ENCODE measurements at regions of chr6 and their contacts with region 1.

Region 1: GRCh38 chr6:136792410-136793262 is at the start of gene MAP3K5:
- DNase-seq: peak; percentile 80 to 95 (median 83)
- ATAC-seq: peak; percentile 90
- H3K4me3 ChIP-seq: peak within 1 kb of the TSS; percentile 63
- H3K27ac ChIP-seq: peak within 1 kb of the TSS; percentile 86
- H3K4me1 ChIP-seq: peaks cover 11 to 21% of the 10 kb centered on the region in 2 experiments; a peak in 4 of 5 replicates
- H3K27me3 ChIP-seq: no peaks in the 10 kb centered on the region
- CTCF ChIP-seq: peak; percentile 85 to 97 (median 90)
- EP300 ChIP-seq: peak; percentile 15; the same call in 1 of the 2 replicates
- POLR2A ChIP-seq: peak; percentile 86
- RAD21 ChIP-seq: peak; percentile 94 to 96
- polyA plus RNA-seq, gene MAP3K5: 2.2 to 3.3 TPM

Region 2: DNA sequence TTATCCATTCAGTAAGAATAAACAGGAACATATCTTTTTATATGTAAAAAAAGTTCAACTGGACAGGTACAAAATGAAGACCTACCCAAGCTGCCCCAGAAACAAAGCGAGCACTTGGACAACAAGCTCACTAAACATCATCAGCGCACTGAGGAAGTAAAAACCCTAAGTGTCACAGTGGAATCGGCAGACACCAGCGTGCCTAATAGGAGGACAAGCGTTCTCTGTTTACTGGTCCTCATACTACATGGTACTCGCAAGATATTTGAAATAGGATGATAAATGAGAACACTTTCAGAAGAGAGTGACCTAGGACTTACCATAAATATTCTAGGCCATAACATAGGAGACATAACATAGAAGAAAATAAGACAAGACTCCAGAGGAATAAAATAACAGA is 260.6 kb before region 1 on chr6:
- CTCF ChIA-PET with region 1: no interaction called
- POLR2A ChIA-PET with region 1: no interaction called
- in situ Hi-C with region 1: no loop called
- intact Hi-C with region 1: no loop called
- DNase-seq: no peak
- ATAC-seq: no peak
- H3K4me3 ChIP-seq: no peak overlapping the region
- H3K27ac ChIP-seq: no peak overlapping the region
- H3K4me1 ChIP-seq: no peaks in the 10 kb centered on the region
- H3K27me3 ChIP-seq: peaks cover 10 to 23% of the 10 kb centered on the region in 2 experiments; a peak in 4 of 5 replicates
- CTCF ChIP-seq: no peak
- EP300 ChIP-seq: no peak
- POLR2A ChIP-seq: no peak
- RAD21 ChIP-seq: no peak

Region 3: GRCh38 chr6:136582711-136583471 is 209.7 kb before region 1 on chr6:
- CTCF ChIA-PET with region 1: interaction called, 17 read pairs
- POLR2A ChIA-PET with region 1: no interaction called
- in situ Hi-C with region 1: no loop called
- intact Hi-C with region 1: loop called (anchors 1 kb)
- DNase-seq: peak in 2 of 4 experiments; percentile 31 to 37
- ATAC-seq: peak; percentile 72
- H3K4me3 ChIP-seq: no peak overlapping the region
- H3K27ac ChIP-seq: no peak overlapping the region
- H3K4me1 ChIP-seq: no peaks in the 10 kb centered on the region
- H3K27me3 ChIP-seq: no peaks in the 10 kb centered on the region
- CTCF ChIP-seq: peak; percentile 11 to 69 (median 31); a peak in 3 of 6 replicates
- EP300 ChIP-seq: no peak
- POLR2A ChIP-seq: no peak
- RAD21 ChIP-seq: peak; percentile 55 to 72

Region 4: GRCh38 chr6:136607932-136608772 is 184.5 kb before region 1 on chr6:
- CTCF ChIA-PET with region 1: interaction called, 5 read pairs
- POLR2A ChIA-PET with region 1: no interaction called
- in situ Hi-C with region 1: no loop called
- intact Hi-C with region 1: loop called (anchors 1 kb)
- DNase-seq: peak; percentile 57 to 83 (median 62)
- ATAC-seq: peak; percentile 89
- H3K4me3 ChIP-seq: no peak overlapping the region
- H3K27ac ChIP-seq: no peak overlapping the region
- H3K4me1 ChIP-seq: peaks cover 10 to 36% of the 10 kb centered on the region in 2 experiments
- H3K27me3 ChIP-seq: no peaks in the 10 kb centered on the region
- CTCF ChIP-seq: peak; percentile 80 to 93 (median 82)
- EP300 ChIP-seq: no peak
- POLR2A ChIP-seq: no peak
- RAD21 ChIP-seq: peak; percentile 39 to 73

Region 5: GRCh38 chr6:136643850-136644596 is 148.6 kb before region 1 on chr6:
- CTCF ChIA-PET with region 1: interaction called, 89 read pairs
- POLR2A ChIA-PET with region 1: interaction called, 13 read pairs
- in situ Hi-C with region 1: loop called (anchors 5 kb)
- intact Hi-C with region 1: loop called (anchors 1 kb)
- DNase-seq: peak; percentile 73 to 89 (median 76)
- ATAC-seq: peak; percentile 95
- H3K4me3 ChIP-seq: no peak overlapping the region
- H3K27ac ChIP-seq: no peak overlapping the region
- H3K4me1 ChIP-seq: peaks cover 0 to 8% of the 10 kb centered on the region in 2 experiments; a peak in 2 of 5 replicates
- H3K27me3 ChIP-seq: no peaks in the 10 kb centered on the region
- CTCF ChIP-seq: peak; percentile 90 to 95 (median 93)
- EP300 ChIP-seq: no peak
- POLR2A ChIP-seq: no peak
- RAD21 ChIP-seq: peak; percentile 99

Region 6: GRCh38 chr6:136737871-136738691 is 54.6 kb before region 1 on chr6:
- CTCF ChIA-PET with region 1: no interaction called
- POLR2A ChIA-PET with region 1: interaction called, 5 read pairs
- in situ Hi-C with region 1: no loop called
- intact Hi-C with region 1: loop called (anchors 1 kb)
- DNase-seq: peak in 2 of 4 experiments; percentile 54 to 72
- ATAC-seq: peak; percentile 56
- H3K4me3 ChIP-seq: 0 out of 2 replicates have a peak overlapping the region, but pooled peaks have one; percentile 2
- H3K27ac ChIP-seq: peak overlapping the region; percentile 73
- H3K4me1 ChIP-seq: peaks cover 7 to 65% of the 10 kb centered on the region in 2 experiments
- H3K27me3 ChIP-seq: no peaks in the 10 kb centered on the region
- CTCF ChIP-seq: no peak
- EP300 ChIP-seq: peak; percentile 88
- POLR2A ChIP-seq: no peak
- RAD21 ChIP-seq: no peak

Region 7: GRCh38 chr6:136772685-136773472 is 19.8 kb before region 1 on chr6:
- CTCF ChIA-PET with region 1: no interaction called
- POLR2A ChIA-PET with region 1: interaction called, 10 read pairs
- in situ Hi-C with region 1: no loop called
- intact Hi-C with region 1: no loop called
- DNase-seq: no peak
- ATAC-seq: peak; percentile 49
- H3K4me3 ChIP-seq: no peak overlapping the region
- H3K27ac ChIP-seq: peak overlapping the region; percentile 46; the same call in 1 of the 3 replicates
- H3K4me1 ChIP-seq: peaks cover 0 to 16% of the 10 kb centered on the region in 2 experiments; a peak in 3 of 5 replicates
- H3K27me3 ChIP-seq: no peaks in the 10 kb centered on the region
- CTCF ChIP-seq: no peak
- EP300 ChIP-seq: no peak
- POLR2A ChIP-seq: no peak
- RAD21 ChIP-seq: no peak